Panc1 (cell line): ENCODE measurements at regions of chr9 and their contacts with region 1.

Region 1: DNA sequence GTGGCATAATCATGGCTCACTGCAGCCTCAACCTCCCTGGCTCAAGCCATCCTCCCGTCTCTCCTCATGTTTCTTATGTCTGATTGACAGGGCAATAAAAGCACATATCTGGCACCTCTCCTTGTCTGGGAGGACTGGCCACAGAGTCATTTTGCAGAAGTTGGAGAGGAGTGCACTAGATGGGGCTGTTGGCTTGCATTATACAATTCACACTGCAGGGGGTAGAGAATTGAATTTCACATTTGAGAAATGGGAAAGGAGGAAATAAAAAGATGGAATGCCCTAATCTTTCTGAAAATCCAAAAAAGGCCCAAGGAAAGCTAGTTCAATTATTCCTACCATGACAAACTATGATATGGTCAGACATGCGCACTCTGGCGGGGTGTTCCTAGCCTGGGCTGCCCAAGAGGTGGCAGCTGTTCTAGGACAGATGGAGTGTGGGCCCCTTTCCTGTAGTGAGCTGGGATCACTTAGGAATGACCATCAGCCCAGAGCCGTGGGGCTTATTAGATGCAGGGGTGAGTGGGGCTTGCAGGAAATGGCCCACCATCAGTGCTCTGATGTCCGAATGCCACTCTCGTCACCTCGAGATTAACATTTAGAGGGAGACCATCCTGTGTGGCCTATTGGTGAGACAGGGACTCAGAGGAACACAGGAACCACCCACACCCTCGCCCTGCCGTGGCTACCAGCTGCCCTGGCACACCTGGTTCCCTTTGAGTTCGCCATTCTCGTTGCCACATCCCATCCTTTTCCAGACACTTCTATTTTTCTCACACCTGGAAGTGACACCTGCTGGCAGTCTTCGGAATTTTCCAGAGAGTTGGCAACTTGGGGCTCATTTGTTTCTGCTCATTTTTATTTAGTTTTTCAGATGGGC is 21.8 kb upstream of the ANKRD18A start:
- DNase-seq: no peak
- ATAC-seq: peak; percentile 88; the same call in 1 of the 2 replicates
- H3K4me3 ChIP-seq: no peak overlapping the region
- H3K27ac ChIP-seq: no peak overlapping the region
- H3K4me1 ChIP-seq: no peaks in the 10 kb centered on the region; the same call in 1 of the 2 replicates
- H3K27me3 ChIP-seq: no peaks in the 10 kb centered on the region
- CTCF ChIP-seq: peak; percentile 70

Region 2: GRCh38 chr9:38620483-38621433 is 21.5 kb before region 1 on chr9 and contains the start of gene ANKRD18A:
- CTCF ChIA-PET with region 1: no interaction called
- POLR2A ChIA-PET with region 1: no interaction called
- in situ Hi-C with region 1: no loop called
- intact Hi-C with region 1: no loop called
- DNase-seq: peak; percentile 61
- ATAC-seq: peak; percentile 90
- H3K4me3 ChIP-seq: peak within 1 kb of the TSS; percentile 56 to 77
- H3K27ac ChIP-seq: peak within 1 kb of the TSS; percentile 75
- H3K4me1 ChIP-seq: no peaks in the 10 kb centered on the region; the same call in 1 of the 2 replicates
- H3K27me3 ChIP-seq: no peaks in the 10 kb centered on the region
- CTCF ChIP-seq: peak; percentile 89
- total RNA-seq, gene ANKRD18A: 9.6 TPM

Region 3: GRCh38 chr9:38681747-38682249 is 39.6 kb after region 1 on chr9:
- CTCF ChIA-PET with region 1: no interaction called
- POLR2A ChIA-PET with region 1: no interaction called
- in situ Hi-C with region 1: no loop called
- intact Hi-C with region 1: no loop called
- DNase-seq: peak; percentile 32
- ATAC-seq: peak; percentile 76
- H3K4me3 ChIP-seq: no peak overlapping the region
- H3K27ac ChIP-seq: peak overlapping the region; percentile 71
- H3K4me1 ChIP-seq: peaks cover 9% of the 10 kb centered on the region
- H3K27me3 ChIP-seq: no peaks in the 10 kb centered on the region
- CTCF ChIP-seq: no peak

Region 4: DNA sequence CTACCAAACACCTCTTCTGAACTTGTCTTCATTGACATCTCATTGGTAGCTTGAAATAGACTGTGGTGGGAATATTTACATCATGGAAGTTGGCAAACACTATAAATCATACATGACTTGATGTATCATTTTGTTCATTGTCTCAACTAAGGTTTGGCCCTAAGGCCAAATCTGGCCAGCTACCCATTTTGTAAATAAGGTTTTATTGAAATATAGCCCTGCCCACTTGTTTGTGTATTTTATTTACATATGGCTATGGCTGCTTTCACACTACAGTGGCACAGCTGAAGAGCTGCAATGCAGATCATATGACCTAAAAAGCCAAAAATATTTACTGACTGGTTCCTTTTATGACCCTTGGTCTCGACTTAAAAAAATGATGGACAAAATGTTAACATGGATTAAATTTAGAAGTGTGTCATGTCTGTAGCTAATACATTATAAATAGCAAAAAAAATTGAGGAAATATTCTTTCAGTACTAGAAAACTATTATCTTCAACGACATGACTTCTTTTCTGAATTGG is 55.6 kb after region 1 on chr9:
- CTCF ChIA-PET with region 1: no interaction called
- POLR2A ChIA-PET with region 1: interaction called, 14 read pairs
- in situ Hi-C with region 1: no loop called
- intact Hi-C with region 1: loop called (anchors 10 kb)
- DNase-seq: no peak
- ATAC-seq: no peak
- H3K4me3 ChIP-seq: no peak overlapping the region
- H3K27ac ChIP-seq: no peak overlapping the region
- H3K4me1 ChIP-seq: no peaks in the 10 kb centered on the region
- H3K27me3 ChIP-seq: no peaks in the 10 kb centered on the region
- CTCF ChIP-seq: no peak

Region 5: GRCh38 chr9:38707885-38708637 is 65.8 kb after region 1 on chr9:
- CTCF ChIA-PET with region 1: interaction called, 4 read pairs
- POLR2A ChIA-PET with region 1: no interaction called
- in situ Hi-C with region 1: no loop called
- intact Hi-C with region 1: loop called (anchors 10 kb)
- DNase-seq: no peak
- ATAC-seq: peak; percentile 74
- H3K4me3 ChIP-seq: no peak overlapping the region
- H3K27ac ChIP-seq: no peak overlapping the region
- H3K4me1 ChIP-seq: no peaks in the 10 kb centered on the region
- H3K27me3 ChIP-seq: no peaks in the 10 kb centered on the region
- CTCF ChIP-seq: peak; percentile 62